A549 (cell line): ENCODE measurements at regions of chr5 and their contacts with region 1.

Region 1: DNA sequence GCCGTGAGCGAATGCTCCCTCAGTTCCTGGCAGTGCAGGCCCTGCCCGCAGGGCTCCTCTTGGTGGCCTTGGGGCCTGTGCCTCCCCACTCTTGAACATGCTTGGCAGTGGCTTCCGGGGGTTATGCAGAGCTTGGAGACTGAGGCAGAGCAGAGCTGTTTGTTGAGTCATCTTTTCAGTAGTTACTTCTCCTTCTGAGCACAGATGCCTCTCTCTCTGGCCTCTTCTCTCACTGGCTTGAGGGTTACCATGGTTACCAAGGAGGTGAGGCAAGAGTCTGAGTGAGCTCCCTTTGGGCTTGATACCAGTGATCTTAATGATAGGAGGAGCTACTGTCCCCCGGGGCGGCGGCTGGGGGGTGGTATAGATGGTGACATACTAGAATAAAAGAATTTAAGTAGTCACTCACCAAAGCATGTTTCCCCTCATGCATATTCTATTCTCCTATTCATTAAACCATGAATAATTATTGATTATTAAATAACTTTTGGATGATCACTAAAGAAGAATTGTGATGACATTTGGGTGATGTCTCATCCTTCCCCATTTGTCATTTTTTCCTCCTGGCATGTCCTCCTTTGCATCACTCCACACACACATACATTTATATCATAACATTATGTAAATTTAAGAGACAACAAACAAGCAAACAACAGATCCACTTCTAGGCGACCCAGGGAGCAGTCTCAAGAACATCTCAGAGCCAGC is 111.1 kb downstream of the ARHGAP26 start:
- DNase-seq: no peak
- ATAC-seq: peak in 1 of 2 experiments; percentile 45; a peak in 2 of 6 replicates
- H3K4me3 ChIP-seq: no peak overlapping the region
- H3K27ac ChIP-seq: no peak overlapping the region
- H3K4me1 ChIP-seq: peaks cover 29% of the 10 kb centered on the region
- CTCF ChIP-seq: no peak
- EP300 ChIP-seq: no peak
- POLR2A ChIP-seq: no peak
- RAD21 ChIP-seq: no peak

Region 2: DNA sequence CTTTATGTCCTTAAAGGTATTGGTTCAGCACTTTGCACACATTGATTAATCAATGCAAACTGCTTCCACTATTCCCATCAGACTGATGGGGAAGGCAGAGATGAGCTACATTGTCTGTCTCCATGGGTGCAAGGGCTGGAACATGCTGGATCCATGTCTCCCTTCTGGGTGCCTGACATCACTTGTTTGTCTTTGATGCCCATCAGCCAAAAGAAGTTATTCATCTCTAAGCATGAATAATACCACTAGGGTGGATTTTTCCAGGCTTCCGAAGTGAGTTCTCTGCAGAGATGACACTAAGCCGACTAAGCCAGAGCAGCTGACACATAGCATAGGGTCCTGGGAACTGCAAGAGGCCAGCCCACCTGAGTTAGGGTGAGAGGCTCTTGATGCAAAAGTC is 204.0 kb before region 1 on chr5:
- CTCF ChIA-PET with region 1: no interaction called
- POLR2A ChIA-PET with region 1: no interaction called
- DNase-seq: peak in 1 of 2 experiments; percentile 13
- ATAC-seq: peak; percentile 35 to 37; a peak in 3 of 6 replicates
- H3K4me3 ChIP-seq: no peak overlapping the region
- H3K27ac ChIP-seq: no peak overlapping the region
- H3K4me1 ChIP-seq: peaks cover 20% of the 10 kb centered on the region
- CTCF ChIP-seq: no peak
- EP300 ChIP-seq: no peak
- POLR2A ChIP-seq: no peak
- RAD21 ChIP-seq: no peak

Region 3: DNA sequence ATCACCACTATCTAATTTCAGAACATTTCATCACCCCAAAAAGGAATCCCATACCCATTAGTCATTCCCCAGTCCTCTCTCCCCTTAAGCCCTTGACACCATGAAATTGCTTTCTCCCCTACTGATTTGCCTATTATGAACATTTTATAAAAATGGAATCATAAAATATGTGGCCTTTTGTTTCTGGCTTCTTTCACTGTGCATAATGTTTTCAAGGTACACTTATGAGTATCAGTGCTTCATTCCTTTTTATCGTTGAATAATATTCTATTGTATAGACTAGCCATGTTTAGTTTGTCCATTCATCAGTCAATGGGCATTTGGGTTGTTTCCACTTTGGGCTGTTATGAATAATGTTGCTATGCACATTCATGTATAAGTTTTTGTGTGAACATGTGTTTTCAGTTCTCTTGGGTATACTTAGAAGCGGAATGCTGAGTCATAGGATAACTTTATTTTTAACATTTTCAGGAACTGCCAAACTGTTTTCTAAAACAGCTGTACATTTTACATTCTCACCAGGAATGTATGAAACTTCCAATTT is 155.0 kb before region 1 on chr5:
- CTCF ChIA-PET with region 1: interaction called, 1,307 read pairs
- POLR2A ChIA-PET with region 1: no interaction called
- DNase-seq: no peak
- ATAC-seq: no peak
- H3K4me3 ChIP-seq: no peak overlapping the region
- H3K27ac ChIP-seq: peak overlapping the region in 1 of 2 experiments; percentile 46; a peak in 2 of 6 replicates
- H3K4me1 ChIP-seq: peaks cover 10% of the 10 kb centered on the region; the same call in 2 of the 3 replicates
- CTCF ChIP-seq: no peak
- EP300 ChIP-seq: no peak
- POLR2A ChIP-seq: no peak
- RAD21 ChIP-seq: no peak

Region 4: DNA sequence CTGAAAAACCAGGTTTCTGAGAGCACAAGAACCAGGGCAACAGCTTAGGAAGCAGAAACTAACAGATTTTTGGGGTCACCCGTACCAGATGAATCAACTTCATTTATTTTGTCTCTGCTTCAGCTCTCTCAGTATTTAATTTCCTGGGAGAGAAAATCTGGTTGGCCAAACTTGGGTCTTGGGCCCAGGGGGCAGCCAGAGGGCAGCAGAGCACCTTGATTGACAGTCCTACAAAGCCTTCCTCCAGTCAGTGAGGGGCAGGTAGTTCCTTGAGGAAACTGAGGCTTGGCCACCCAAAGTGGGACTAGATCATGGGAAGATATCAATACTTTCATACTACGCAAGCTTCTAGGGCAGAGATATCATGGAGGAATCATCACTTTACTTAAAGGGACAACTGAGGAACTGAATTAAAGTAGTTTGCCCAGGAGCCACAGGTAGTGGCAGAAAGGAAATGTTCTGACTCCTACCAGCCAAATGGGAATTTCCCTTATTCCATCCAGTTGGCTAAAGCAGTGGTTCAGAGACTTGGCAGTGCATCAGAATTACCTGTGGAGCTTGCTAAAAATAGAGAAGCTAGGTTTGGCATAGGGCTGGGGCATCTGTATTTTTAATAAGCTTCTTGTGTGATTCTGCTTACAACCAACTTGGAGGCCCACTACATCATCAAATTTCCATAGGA is 132.5 kb before region 1 on chr5:
- CTCF ChIA-PET with region 1: interaction called, 473 read pairs
- POLR2A ChIA-PET with region 1: no interaction called
- DNase-seq: peak in 1 of 2 experiments; percentile 44
- ATAC-seq: peak; percentile 60 to 82; a peak in 4 of 6 replicates
- H3K4me3 ChIP-seq: no peak overlapping the region
- H3K27ac ChIP-seq: no peak overlapping the region
- H3K4me1 ChIP-seq: peaks cover 10% of the 10 kb centered on the region; the same call in 2 of the 3 replicates
- CTCF ChIP-seq: peak; percentile 73
- EP300 ChIP-seq: no peak
- POLR2A ChIP-seq: no peak
- RAD21 ChIP-seq: peak; percentile 90 to 91

Region 5: DNA sequence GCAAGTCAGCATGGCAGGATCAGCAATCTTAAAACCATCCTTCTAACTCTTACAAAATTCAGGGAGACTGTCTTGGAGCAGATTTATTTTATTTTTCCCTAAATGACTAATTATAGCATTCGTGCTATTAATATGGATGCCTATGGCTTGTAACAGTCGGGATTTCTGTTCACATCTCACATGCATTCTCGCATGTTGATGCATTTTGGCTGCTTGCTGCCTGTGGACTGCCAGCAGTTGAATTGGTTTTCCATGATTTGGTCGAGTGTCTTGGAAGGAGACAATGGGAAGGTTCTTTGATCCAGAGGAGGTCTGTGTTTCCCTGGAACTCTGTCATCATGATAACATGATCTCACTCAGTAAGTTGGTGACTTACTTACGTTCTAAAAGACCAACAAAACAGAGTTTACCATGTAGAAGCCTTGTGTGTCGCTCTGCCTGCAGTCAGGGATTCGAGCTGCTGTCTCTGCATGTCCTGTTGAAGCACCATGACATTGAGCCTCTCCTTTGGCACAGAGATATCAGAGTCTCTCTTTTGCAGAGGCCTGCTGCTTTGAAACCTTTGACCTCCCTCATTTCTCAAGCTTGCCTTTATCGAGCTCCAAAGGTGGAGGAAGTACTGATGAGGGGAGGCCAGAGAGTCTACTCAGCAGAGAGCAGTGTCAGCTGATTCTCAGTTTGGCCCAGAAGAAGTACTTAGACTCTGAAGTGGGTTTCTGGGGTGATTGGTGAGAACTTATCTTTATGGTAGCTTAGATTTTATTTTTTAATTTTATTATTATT is 28.6 kb before region 1 on chr5:
- CTCF ChIA-PET with region 1: interaction called, 14 read pairs
- POLR2A ChIA-PET with region 1: no interaction called
- DNase-seq: no peak
- ATAC-seq: no peak
- H3K4me3 ChIP-seq: no peak overlapping the region
- H3K27ac ChIP-seq: no peak overlapping the region
- H3K4me1 ChIP-seq: peaks cover 9% of the 10 kb centered on the region; the same call in 2 of the 3 replicates
- CTCF ChIP-seq: no peak
- EP300 ChIP-seq: no peak
- POLR2A ChIP-seq: no peak
- RAD21 ChIP-seq: no peak

Region 6: DNA sequence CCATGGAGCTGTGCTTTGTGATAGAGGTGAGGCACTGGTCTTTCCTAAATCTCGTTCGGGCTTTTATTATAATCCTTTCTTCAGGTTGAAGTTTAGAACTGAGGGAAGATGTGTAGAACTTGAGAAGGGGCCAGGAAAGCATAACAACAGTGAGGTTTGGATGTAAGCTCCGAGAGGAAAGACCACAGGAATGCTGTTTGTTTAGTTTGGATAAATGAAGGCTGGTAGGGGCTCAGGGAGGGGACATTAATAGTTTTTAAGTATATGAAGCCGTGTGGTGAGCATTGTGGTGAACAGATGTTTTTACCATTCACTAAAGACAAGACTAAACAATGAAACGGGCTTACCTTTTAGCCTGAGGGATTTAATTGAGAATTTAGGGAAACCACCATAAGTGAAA is 19.7 kb after region 1 on chr5:
- CTCF ChIA-PET with region 1: interaction called, 12 read pairs
- POLR2A ChIA-PET with region 1: no interaction called
- DNase-seq: no peak
- ATAC-seq: no peak
- H3K4me3 ChIP-seq: no peak overlapping the region
- H3K27ac ChIP-seq: no peak overlapping the region
- H3K4me1 ChIP-seq: no peaks in the 10 kb centered on the region
- CTCF ChIP-seq: no peak
- EP300 ChIP-seq: no peak
- POLR2A ChIP-seq: no peak
- RAD21 ChIP-seq: no peak

Region 7: GRCh38 chr5:143016777-143017516 is 135.7 kb after region 1 on chr5:
- CTCF ChIA-PET with region 1: no interaction called
- POLR2A ChIA-PET with region 1: no interaction called
- DNase-seq: peak in 1 of 2 experiments; percentile 54
- ATAC-seq: peak; percentile 47 to 68; a peak in 4 of 6 replicates
- H3K4me3 ChIP-seq: no peak overlapping the region
- H3K27ac ChIP-seq: no peak overlapping the region
- H3K4me1 ChIP-seq: peaks cover 5% of the 10 kb centered on the region; the same call in 1 of the 3 replicates
- CTCF ChIP-seq: peak; percentile 38; the same call in 2 of the 3 replicates
- EP300 ChIP-seq: no peak
- POLR2A ChIP-seq: no peak
- RAD21 ChIP-seq: peak; percentile 48 to 64

Region 8: GRCh38 chr5:143471041-143471521 is 589.9 kb after region 1 on chr5:
- CTCF ChIA-PET with region 1: no interaction called
- POLR2A ChIA-PET with region 1: no interaction called
- DNase-seq: peak in 1 of 2 experiments; percentile 28
- ATAC-seq: peak; percentile 50 to 84; a peak in 5 of 6 replicates
- H3K4me3 ChIP-seq: no peak overlapping the region
- H3K27ac ChIP-seq: peak overlapping the region in 1 of 2 experiments; percentile 64; a peak in 4 of 6 replicates
- H3K4me1 ChIP-seq: peaks cover 19% of the 10 kb centered on the region
- CTCF ChIP-seq: no peak
- EP300 ChIP-seq: no peak
- POLR2A ChIP-seq: no peak
- RAD21 ChIP-seq: no peak